T-cell (primary cell): ENCODE measurements at regions of chr5 and their contacts with region 1.

Region 1: DNA sequence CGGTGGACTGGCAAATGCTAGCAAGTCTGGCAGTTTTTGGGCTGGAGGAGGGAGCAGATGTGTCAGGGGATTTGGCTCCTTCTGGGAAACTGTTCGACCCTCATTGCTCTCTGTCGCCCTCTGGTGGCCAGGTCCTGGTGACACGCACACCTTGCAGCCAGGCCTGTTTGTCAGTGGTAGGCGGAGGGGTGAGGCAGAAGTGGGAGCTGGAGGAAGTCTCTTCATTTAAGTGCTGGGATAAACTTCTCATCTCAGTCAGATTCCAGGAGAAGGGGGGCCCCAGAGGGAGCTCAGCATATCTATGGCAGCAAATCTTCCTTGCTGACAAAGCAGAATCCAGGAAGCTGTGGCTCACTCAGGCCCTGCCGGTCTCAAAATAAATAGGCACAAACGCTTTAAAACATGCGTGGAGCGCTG is 326.5 kb downstream of the ZSWIM6 start:
- DNase-seq: peak; percentile 29 to 84 (median 72)
- ATAC-seq: peak; percentile 62 to 76 (median 68)
- H3K4me3 ChIP-seq: no peak overlapping the region
- H3K4me3 Mint-ChIP-seq: no peak overlapping the region
- H3K27ac ChIP-seq: no peak overlapping the region
- H3K27ac Mint-ChIP-seq: no peak overlapping the region
- H3K4me1 ChIP-seq: no peaks in the 10 kb centered on the region
- H3K4me1 Mint-ChIP-seq: no peaks in the 10 kb centered on the region
- H3K27me3 ChIP-seq: peaks cover 0 to 20% of the 10 kb centered on the region in 2 experiments
- H3K27me3 Mint-ChIP-seq: peaks cover 6 to 10% of the 10 kb centered on the region in 2 donors

Region 2: GRCh38 chr5:60960591-60960990 is 698.0 kb before region 1 on chr5:
- CTCF ChIA-PET with region 1: interaction called, 11 to 17 read pairs
- POLR2A ChIA-PET with region 1: no interaction called
- DNase-seq: peak in 6 of 35 experiments; percentile 4 to 44 (median 7)
- ATAC-seq: peak in 1 of 4 experiments; percentile 46
- H3K4me3 ChIP-seq: no peak overlapping the region
- H3K4me3 Mint-ChIP-seq: no peak overlapping the region
- H3K27ac ChIP-seq: no peak overlapping the region
- H3K27ac Mint-ChIP-seq: no peak overlapping the region
- H3K4me1 ChIP-seq: peaks cover 0 to 2% of the 10 kb centered on the region in 2 experiments
- H3K4me1 Mint-ChIP-seq: peaks cover 6 to 22% (median 12%) of the 10 kb centered on the region in 3 donors
- H3K27me3 ChIP-seq: no peaks in the 10 kb centered on the region
- H3K27me3 Mint-ChIP-seq: no peaks in the 10 kb centered on the region

Region 3: GRCh38 chr5:61055434-61056006 is 603.1 kb before region 1 on chr5:
- CTCF ChIA-PET with region 1: interaction called, 24 to 47 read pairs
- POLR2A ChIA-PET with region 1: no interaction called
- DNase-seq: peak in 2 of 35 experiments; percentile 3 to 54
- ATAC-seq: no peak
- H3K4me3 ChIP-seq: no peak overlapping the region
- H3K4me3 Mint-ChIP-seq: no peak overlapping the region
- H3K27ac ChIP-seq: no peak overlapping the region
- H3K27ac Mint-ChIP-seq: no peak overlapping the region
- H3K4me1 ChIP-seq: no peaks in the 10 kb centered on the region
- H3K4me1 Mint-ChIP-seq: no peaks in the 10 kb centered on the region
- H3K27me3 ChIP-seq: no peaks in the 10 kb centered on the region
- H3K27me3 Mint-ChIP-seq: no peaks in the 10 kb centered on the region